Left ventricle myocardium superior (tissue), 1 donor: ENCODE measurements at regions of chr1 and their contacts with region 1.

Region 1: GRCh38 chr1:173202430-173203145 is 4.5 kb downstream of the TNFSF4 start:
- DNase-seq: no peak
- ATAC-seq: peak; percentile 77

Region 2: DNA sequence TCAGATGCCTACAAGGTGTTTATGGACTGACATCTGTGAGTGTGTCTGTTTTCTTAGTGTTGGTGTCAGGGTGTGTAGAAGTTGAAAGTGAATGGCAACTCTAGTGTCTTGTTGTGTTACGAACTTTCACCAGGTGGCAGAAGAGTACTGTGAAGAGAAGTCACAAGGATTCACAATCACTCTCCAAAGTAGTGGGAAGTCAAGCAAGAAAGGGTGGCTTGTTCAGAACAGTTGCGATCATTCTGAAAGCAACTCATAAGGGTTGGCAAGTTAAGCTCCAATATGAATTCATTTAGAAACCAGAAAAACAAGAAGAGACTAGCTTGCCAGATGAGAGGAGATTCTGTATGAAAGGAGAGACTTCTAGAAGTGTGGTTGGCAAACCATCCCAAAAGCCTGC is 457.6 kb before region 1 on chr1:
- intact Hi-C with region 1: loop called (anchors 2 kb)
- DNase-seq: no peak
- ATAC-seq: peak; percentile 78

Region 3: GRCh38 chr1:172826096-172826743 is 376.4 kb before region 1 on chr1:
- intact Hi-C with region 1: loop called (anchors 1 kb)
- DNase-seq: no peak
- ATAC-seq: peak; percentile 91

Region 4: DNA sequence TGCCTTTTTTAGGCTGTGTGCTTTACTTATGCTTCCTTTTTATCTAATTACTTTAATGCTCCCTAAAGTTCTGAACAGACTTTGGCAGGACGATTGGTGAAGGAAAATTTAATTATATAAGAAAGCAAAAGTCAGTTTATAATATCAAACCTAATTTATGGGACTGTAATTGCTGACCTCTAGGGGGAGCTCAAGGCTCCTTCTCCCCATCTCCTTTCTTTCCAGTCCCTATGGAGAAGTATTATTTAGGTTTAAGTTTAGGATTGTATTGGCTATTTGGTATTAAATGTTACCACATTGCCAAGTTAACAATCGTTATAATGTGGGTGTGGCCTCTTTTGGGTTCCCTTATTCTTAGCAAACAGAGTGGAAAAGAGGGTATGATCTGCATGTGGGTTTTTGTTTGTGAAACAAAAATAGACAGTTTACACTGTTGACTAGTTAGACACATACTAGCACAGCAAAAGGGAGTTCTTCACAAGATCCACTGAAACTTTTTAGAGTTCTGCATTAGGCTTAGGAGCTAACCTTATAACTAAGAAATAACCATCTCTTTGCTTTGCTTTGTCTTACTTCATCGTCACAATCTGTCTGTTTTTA is 52.7 kb after region 1 on chr1:
- intact Hi-C with region 1: no loop called
- DNase-seq: no peak
- ATAC-seq: no peak